Caco-2 (cell line): ENCODE measurements at regions of chr10 and their contacts with region 1.

Region 1: GRCh38 chr10:77290528-77291155 is 347.0 kb downstream of the KCNMA1 start:
- DNase-seq: peak; percentile 36
- H3K4me3 ChIP-seq: no peak overlapping the region
- H3K4me3 Mint-ChIP-seq: peak overlapping the region; percentile 37
- H3K27ac Mint-ChIP-seq: peak overlapping the region; percentile 68
- H3K4me1 ChIP-seq: peaks cover 88% of the 10 kb centered on the region
- H3K4me1 Mint-ChIP-seq: peaks cover 60% of the 10 kb centered on the region
- H3K27me3 ChIP-seq: no peaks in the 10 kb centered on the region
- H3K27me3 Mint-ChIP-seq: no peaks in the 10 kb centered on the region
- CTCF ChIP-seq: no peak

Region 2: DNA sequence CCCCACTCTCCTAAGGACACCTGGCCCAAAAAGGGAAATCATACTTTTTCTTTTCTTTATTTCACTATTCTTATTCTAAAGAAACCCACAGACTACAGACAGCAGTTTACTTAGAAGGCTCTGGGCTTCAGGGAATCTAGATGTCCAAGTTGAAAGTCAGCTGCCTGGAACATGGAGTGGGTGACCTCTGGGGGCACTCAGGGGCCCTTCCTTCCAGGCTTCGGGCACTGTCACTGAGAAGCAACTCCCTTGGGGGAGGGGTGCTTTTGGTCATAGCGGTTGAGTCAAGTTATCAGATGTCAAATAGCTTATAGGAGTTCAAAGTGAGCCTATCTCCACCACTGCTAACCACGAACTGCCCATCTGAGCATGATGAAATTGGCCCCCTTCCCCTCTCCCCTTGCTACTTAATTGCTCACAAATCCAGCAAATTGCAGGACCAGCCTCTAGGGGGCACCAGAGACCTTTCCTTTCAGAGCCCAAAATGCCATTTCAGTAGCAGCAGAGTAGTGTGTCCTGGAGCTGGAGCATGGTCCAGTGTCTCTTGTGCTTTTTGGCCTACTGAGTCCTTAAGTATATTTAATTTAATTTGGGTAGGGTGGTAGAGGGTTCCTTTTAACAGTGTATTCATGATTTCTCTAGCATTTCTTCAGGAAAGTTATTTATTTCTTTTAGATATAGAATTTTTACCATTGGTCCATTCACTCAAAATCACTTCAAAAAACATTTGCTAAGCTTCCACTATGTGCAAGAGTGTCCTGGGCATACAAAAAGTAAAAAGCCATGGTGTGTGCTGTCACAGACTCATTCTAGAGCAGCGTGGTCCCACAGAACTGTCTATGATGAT is 116.8 kb before region 1 on chr10:
- CTCF ChIA-PET with region 1: interaction called, 3 read pairs
- POLR2A ChIA-PET with region 1: no interaction called
- intact Hi-C with region 1: loop called (anchors 2 kb)
- DNase-seq: peak; percentile 75 to 87
- H3K4me3 ChIP-seq: no peak overlapping the region
- H3K4me3 Mint-ChIP-seq: no peak overlapping the region
- H3K27ac Mint-ChIP-seq: no peak overlapping the region
- H3K4me1 ChIP-seq: no peaks in the 10 kb centered on the region
- H3K4me1 Mint-ChIP-seq: no peaks in the 10 kb centered on the region
- H3K27me3 ChIP-seq: no peaks in the 10 kb centered on the region
- H3K27me3 Mint-ChIP-seq: no peaks in the 10 kb centered on the region
- CTCF ChIP-seq: peak; percentile 84 to 94

Region 3: DNA sequence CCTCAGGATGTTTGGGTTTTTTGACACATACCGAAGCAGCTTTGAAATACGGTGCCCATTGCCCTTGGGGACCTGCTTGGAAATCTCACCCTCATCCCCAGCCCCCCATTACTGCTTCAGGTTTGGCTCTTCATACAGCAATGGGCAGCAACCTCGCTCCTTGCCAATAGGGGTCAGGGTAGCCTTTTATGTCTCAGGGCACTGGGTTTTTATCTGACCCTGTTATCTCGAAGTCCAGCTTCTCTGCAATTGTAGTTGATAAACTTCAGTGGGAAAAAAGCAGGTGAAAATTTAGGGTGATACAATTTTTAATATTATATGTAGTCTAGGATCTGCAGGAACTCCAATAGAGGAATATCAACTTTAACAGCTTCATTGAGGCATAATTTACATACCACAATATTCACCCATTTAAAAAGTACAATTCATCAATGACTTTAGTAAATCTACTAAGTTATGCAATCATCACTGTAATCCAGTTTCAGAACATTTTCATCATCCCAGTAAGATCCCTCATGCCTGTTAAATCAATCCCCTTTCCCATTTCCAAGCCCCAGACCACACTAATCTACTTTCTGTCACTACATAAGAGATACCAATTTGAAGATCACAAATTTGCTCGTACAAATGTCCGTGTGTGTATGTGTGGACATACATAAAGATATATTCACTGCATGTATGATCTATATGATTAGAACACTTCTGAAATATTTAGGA is 39.2 kb before region 1 on chr10:
- CTCF ChIA-PET with region 1: interaction called, 8 read pairs
- POLR2A ChIA-PET with region 1: no interaction called
- intact Hi-C with region 1: loop called (anchors 1 kb)
- DNase-seq: peak; percentile 63 to 74
- H3K4me3 ChIP-seq: no peak overlapping the region
- H3K4me3 Mint-ChIP-seq: no peak overlapping the region
- H3K27ac Mint-ChIP-seq: no peak overlapping the region
- H3K4me1 ChIP-seq: peaks cover 53% of the 10 kb centered on the region
- H3K4me1 Mint-ChIP-seq: peaks cover 43% of the 10 kb centered on the region
- H3K27me3 ChIP-seq: no peaks in the 10 kb centered on the region
- H3K27me3 Mint-ChIP-seq: no peaks in the 10 kb centered on the region
- CTCF ChIP-seq: peak; percentile 88 to 89

Region 4: DNA sequence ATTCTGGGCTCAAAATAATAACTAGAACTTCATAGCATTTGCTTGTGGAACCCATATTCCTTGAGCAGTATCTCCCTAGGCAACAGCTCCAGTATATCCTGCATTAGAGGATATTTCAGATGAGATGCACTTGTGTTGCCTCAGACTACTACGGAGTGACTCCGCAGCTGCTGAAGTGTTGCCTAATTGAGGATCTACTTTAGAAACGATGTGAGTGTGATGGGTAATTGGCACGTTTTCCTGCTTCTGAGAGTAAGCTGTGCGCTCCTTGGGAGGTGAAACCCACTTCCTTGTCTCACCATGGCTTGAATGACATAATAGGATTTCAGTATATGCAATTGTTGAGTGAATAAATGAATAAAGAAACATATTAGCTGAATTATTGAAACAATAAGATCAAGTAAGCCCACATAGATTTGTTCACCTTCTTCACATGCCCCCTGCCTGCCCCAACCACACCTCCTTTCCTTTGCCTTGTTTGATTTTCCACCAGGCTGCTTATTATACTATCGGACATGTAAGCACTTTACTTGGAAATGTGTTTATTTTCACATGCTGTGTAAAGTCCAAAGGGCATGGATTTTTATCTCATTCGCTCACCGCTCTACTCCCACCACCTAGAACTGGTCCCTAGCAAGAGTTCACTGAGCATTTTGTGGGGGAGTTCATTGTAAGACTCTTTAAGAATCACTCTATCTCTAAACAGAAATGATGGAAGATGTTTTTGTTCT is 43.1 kb after region 1 on chr10:
- CTCF ChIA-PET with region 1: interaction called, 3 read pairs
- POLR2A ChIA-PET with region 1: no interaction called
- intact Hi-C with region 1: loop called (anchors 1 kb)
- DNase-seq: peak; percentile 73 to 79
- H3K4me3 ChIP-seq: no peak overlapping the region
- H3K4me3 Mint-ChIP-seq: peak overlapping the region; percentile 58
- H3K27ac Mint-ChIP-seq: peak overlapping the region; percentile 91
- H3K4me1 ChIP-seq: peaks cover 51% of the 10 kb centered on the region
- H3K4me1 Mint-ChIP-seq: peaks cover 57% of the 10 kb centered on the region
- H3K27me3 ChIP-seq: no peaks in the 10 kb centered on the region
- H3K27me3 Mint-ChIP-seq: no peaks in the 10 kb centered on the region
- CTCF ChIP-seq: no peak

Region 5: DNA sequence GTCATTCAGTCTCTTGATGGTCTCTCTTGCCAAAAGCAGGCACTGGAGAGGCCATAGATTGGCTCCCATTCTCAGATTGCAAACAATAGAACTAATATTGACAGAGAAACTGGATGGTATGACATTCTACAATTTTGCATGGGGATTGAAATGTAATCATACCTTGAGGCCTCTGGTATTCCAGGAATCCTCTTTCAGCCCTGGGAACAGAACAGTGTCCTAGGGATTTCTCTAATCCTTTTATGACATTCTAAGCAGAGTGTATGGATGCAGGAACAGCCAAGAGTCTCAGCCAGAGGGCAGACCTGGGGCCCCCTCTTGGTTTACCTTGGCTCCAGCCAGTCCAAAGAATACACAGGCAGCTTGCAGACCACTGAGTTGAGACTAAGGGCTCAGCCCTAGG is 140.6 kb after region 1 on chr10:
- CTCF ChIA-PET with region 1: no interaction called
- POLR2A ChIA-PET with region 1: no interaction called
- intact Hi-C with region 1: loop called (anchors 2 kb)
- DNase-seq: peak; percentile 90 to 94
- H3K4me3 ChIP-seq: no peak overlapping the region
- H3K4me3 Mint-ChIP-seq: peak overlapping the region; percentile 47
- H3K27ac Mint-ChIP-seq: peak overlapping the region; percentile 92
- H3K4me1 ChIP-seq: peaks cover 62% of the 10 kb centered on the region
- H3K4me1 Mint-ChIP-seq: peaks cover 66% of the 10 kb centered on the region
- H3K27me3 ChIP-seq: no peaks in the 10 kb centered on the region
- H3K27me3 Mint-ChIP-seq: no peaks in the 10 kb centered on the region
- CTCF ChIP-seq: peak in 1 of 2 experiments; percentile 75

Region 6: GRCh38 chr10:77458986-77459590 is 168.4 kb after region 1 on chr10:
- CTCF ChIA-PET with region 1: no interaction called
- POLR2A ChIA-PET with region 1: interaction called, 12 read pairs
- intact Hi-C with region 1: no loop called
- DNase-seq: no peak
- H3K4me3 ChIP-seq: no peak overlapping the region
- H3K4me3 Mint-ChIP-seq: no peak overlapping the region
- H3K27ac Mint-ChIP-seq: no peak overlapping the region
- H3K4me1 ChIP-seq: peaks cover 6% of the 10 kb centered on the region
- H3K4me1 Mint-ChIP-seq: peaks cover 38% of the 10 kb centered on the region
- H3K27me3 ChIP-seq: no peaks in the 10 kb centered on the region
- H3K27me3 Mint-ChIP-seq: no peaks in the 10 kb centered on the region
- CTCF ChIP-seq: no peak

Region 7: GRCh38 chr10:77983384-77984341 is 693.0 kb after region 1 on chr10:
- CTCF ChIA-PET with region 1: no interaction called
- POLR2A ChIA-PET with region 1: no interaction called
- intact Hi-C with region 1: no loop called
- DNase-seq: no peak
- H3K4me3 ChIP-seq: no peak overlapping the region
- H3K4me3 Mint-ChIP-seq: no peak overlapping the region
- H3K27ac Mint-ChIP-seq: no peak overlapping the region
- H3K4me1 ChIP-seq: no peaks in the 10 kb centered on the region
- H3K4me1 Mint-ChIP-seq: no peaks in the 10 kb centered on the region
- H3K27me3 ChIP-seq: no peaks in the 10 kb centered on the region
- H3K27me3 Mint-ChIP-seq: no peaks in the 10 kb centered on the region
- CTCF ChIP-seq: no peak